ENCODE measurements at regions of chr15 and their contacts with region 1.

Region 1: DNA sequence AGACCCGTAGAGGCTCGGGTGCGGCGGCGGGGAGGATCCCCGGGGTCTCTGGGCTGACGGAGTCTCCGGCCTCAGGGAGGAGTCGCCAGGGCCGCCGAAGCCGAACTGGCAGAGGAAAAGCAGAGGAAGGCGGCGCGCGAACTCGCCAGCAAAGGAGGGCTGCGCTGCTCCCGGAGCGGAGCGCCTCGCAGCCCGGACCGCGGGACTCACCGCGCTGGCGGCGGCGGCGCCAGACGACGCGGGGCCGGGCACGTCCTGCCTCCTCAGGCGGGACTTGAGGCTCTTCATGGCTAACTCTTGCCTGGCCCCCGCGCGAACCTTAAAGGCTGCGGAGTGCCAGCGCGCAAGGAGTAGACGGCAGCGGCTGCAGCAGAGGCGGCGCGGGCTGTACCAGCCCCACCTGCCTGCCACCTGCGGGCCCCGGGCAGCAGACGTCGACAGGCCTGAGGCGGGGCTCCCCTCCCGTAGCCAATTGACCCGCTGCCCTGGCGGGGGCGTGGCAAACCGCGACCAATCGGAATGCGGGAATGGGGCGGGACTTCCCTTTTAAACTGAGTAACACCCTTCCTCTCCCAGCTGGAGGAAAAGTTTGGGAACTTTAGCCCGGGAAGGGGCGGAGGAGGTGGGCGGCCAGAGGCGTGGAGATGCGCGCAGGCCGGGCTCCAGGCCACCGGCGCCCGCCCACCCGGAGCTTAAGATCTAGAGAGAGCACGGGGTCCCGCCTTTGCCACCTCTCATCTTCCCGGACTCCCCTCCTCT is at the start of gene UACA:
- DNase-seq: peak; percentile 98
- ATAC-seq: peak; percentile 76 to 80
- H3K4me3 ChIP-seq: peak within 1 kb of the TSS; percentile 85 to 96 (median 92)
- H3K27ac ChIP-seq: peak within 1 kb of the TSS; percentile 95 to 99 (median 98)
- H3K4me1 ChIP-seq: peaks cover 56 to 65% of the 10 kb centered on the region in 2 donors
- H3K27me3 ChIP-seq: no peaks in the 10 kb centered on the region
- CTCF ChIP-seq: peak in 2 of 5 experiments; percentile 14 to 29
- POLR2A ChIP-seq: peak; percentile 98 to 100
- total RNA-seq, gene UACA: 101 to 192 (median 127) TPM

Region 2: GRCh38 chr15:69794645-69795461 is 968.4 kb before region 1 on chr15:
- in situ Hi-C with region 1: no loop called
- intact Hi-C with region 1: loop called (anchors 5 kb)
- DNase-seq: peak; percentile 33 to 42
- ATAC-seq: no peak
- H3K4me3 ChIP-seq: no peak overlapping the region
- H3K27ac ChIP-seq: peak overlapping the region; percentile 46 to 68 (median 60)
- H3K4me1 ChIP-seq: peaks cover 29 to 39% of the 10 kb centered on the region in 2 donors
- H3K27me3 ChIP-seq: no peaks in the 10 kb centered on the region
- CTCF ChIP-seq: no peak
- POLR2A ChIP-seq: no peak

Region 3: GRCh38 chr15:70690491-70691257 is 72.6 kb before region 1 on chr15:
- in situ Hi-C with region 1: no loop called
- intact Hi-C with region 1: no loop called
- DNase-seq: no peak
- ATAC-seq: no peak
- H3K4me3 ChIP-seq: no peak overlapping the region
- H3K27ac ChIP-seq: peak overlapping the region; percentile 24 to 65 (median 32)
- H3K4me1 ChIP-seq: peaks cover 38 to 48% of the 10 kb centered on the region in 2 donors
- H3K27me3 ChIP-seq: no peaks in the 10 kb centered on the region
- CTCF ChIP-seq: no peak
- POLR2A ChIP-seq: no peak

Region 4: GRCh38 chr15:70701891-70702568 is 61.3 kb before region 1 on chr15:
- in situ Hi-C with region 1: loop called in 1 of 4 experiments (anchors 10 kb)
- intact Hi-C with region 1: loop called (anchors 2 kb)
- DNase-seq: peak; percentile 48 to 56
- ATAC-seq: peak; percentile 85 to 90
- H3K4me3 ChIP-seq: peak overlapping the region; percentile 41 to 53 (median 46)
- H3K27ac ChIP-seq: peak overlapping the region; percentile 79 to 92 (median 88)
- H3K4me1 ChIP-seq: peaks cover 61 to 92% of the 10 kb centered on the region in 2 donors
- H3K27me3 ChIP-seq: no peaks in the 10 kb centered on the region
- CTCF ChIP-seq: no peak
- POLR2A ChIP-seq: peak; percentile 65 to 85

Region 5: DNA sequence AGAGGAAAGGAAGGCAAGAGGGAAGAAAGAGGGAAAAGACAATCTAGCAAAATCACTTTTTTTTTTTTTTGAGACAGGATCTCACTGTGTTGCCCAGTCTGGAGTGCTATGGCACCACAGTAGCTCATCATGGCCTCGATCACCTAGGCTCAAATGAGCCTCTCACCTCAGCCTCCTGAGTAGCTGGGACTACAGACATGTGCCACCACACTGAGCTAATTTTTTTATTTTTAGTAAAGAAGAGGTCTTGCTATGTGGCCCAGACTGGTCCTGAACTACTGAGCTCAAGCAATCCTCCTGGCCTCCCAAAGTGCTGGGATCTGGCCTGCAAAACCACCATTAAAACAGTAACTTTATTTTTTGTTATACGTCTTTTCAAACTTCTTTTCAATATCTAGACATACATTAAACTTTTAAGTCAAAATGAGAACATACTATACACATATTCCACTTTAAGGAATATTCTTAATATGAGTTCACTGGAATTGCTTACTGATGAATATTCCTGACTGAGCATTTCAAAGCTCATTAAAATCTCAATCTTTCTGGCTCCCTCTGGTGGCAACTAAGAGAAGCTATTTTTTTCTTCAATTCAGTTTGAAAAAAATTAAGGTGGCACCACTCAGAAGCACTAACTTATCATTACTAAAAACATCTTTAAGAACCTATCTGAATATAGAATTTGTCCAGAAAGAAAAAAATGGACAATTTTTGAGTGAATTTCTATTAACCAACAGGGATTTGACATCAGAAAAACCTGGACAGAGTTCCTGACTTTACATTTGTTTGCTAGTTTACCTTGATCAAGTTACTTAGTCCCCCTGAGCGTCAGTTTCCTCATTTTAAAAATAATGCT is 40.8 kb before region 1 on chr15:
- in situ Hi-C with region 1: no loop called
- intact Hi-C with region 1: loop called (anchors 5 kb)
- DNase-seq: no peak
- ATAC-seq: peak; percentile 41 to 48
- H3K4me3 ChIP-seq: no peak overlapping the region
- H3K27ac ChIP-seq: peak overlapping the region; percentile 61 to 88 (median 78)
- H3K4me1 ChIP-seq: peaks cover 58 to 76% of the 10 kb centered on the region in 2 donors
- H3K27me3 ChIP-seq: no peaks in the 10 kb centered on the region
- CTCF ChIP-seq: peak; percentile 63 to 93 (median 71)
- POLR2A ChIP-seq: no peak

Region 6: GRCh38 chr15:70741107-70741531 is 22.2 kb before region 1 on chr15:
- in situ Hi-C with region 1: no loop called
- intact Hi-C with region 1: loop called (anchors 1 kb)
- DNase-seq: peak; percentile 90 to 92
- ATAC-seq: peak; percentile 81 to 87
- H3K4me3 ChIP-seq: peak overlapping the region in 2 of 4 donors; percentile 24 to 44
- H3K27ac ChIP-seq: peak overlapping the region; percentile 88 to 95 (median 91)
- H3K4me1 ChIP-seq: peaks cover 78 to 87% of the 10 kb centered on the region in 2 donors
- H3K27me3 ChIP-seq: no peaks in the 10 kb centered on the region
- CTCF ChIP-seq: no peak
- POLR2A ChIP-seq: peak in 1 of 2 donors; percentile 45

Region 7: GRCh38 chr15:70892002-70892914 is 129.0 kb after region 1 on chr15 and contains the starts of genes LRRC49 and THAP10:
- in situ Hi-C with region 1: no loop called
- intact Hi-C with region 1: loop called (anchors 5 kb)
- DNase-seq: peak; percentile 68 to 82
- ATAC-seq: peak; percentile 95 to 96
- H3K4me3 ChIP-seq: peak within 1 kb of the TSS; percentile 72 to 88 (median 84)
- H3K27ac ChIP-seq: peak within 1 kb of the TSS; percentile 64 to 72 (median 67)
- H3K4me1 ChIP-seq: peaks cover 6 to 17% of the 10 kb centered on the region in 2 donors
- H3K27me3 ChIP-seq: no peaks in the 10 kb centered on the region
- CTCF ChIP-seq: no peak
- POLR2A ChIP-seq: no peak
- total RNA-seq, gene LRRC49: 0.51 to 5.0 (median 2.8) TPM
- total RNA-seq, gene THAP10: 0.46 to 2.3 (median 1.1) TPM

Measured in gastrocnemius medialis (tissue), 4 donors.